HEK293 (cell line): ENCODE measurements at regions of chr11 and their contacts with region 1.

Region 1: DNA sequence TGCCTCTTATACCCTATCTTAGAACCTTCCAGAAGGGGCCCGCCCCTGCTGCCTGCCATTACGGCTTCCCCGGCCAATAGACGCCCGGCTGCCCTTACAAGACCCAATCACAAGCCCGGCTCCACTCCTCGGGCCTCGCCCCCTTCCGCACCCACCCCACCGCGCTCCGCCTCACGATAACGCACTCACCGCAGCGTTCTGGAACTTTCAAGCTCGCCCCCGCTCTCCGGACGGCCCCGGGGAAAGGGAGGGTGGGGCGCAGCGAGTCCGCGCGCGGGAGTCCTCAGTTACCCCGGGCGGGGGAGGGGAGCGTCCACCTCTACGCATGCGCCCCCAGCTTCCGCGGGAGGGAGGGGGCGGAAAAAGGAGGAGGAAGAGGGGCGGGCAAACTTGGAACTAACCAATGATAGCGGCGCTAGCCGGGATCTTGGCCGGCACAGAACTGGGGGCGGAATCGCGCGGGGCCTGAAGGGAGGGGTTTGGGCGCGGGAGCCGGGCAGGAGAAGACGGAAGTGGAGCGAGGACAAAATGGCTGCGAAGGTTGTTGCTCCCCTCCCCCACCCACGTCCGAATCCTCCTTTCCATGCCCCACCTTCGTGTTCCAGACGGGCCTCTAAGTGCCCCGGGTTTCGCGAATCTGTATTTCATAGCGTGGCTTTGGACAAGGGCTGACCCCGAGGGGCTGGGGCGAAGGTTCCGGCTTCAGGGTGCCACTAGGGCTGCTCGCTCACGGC is 389 bp upstream of the HSPA8 start:
- H3K4me3 ChIP-seq: peak overlapping the region; percentile 88
- H3K27ac ChIP-seq: peak overlapping the region; percentile 92
- H3K4me1 ChIP-seq: no peaks in the 10 kb centered on the region
- CTCF ChIP-seq: 0 out of 2 replicates have a peak, but pooled peaks have one; percentile 35

Region 2: DNA sequence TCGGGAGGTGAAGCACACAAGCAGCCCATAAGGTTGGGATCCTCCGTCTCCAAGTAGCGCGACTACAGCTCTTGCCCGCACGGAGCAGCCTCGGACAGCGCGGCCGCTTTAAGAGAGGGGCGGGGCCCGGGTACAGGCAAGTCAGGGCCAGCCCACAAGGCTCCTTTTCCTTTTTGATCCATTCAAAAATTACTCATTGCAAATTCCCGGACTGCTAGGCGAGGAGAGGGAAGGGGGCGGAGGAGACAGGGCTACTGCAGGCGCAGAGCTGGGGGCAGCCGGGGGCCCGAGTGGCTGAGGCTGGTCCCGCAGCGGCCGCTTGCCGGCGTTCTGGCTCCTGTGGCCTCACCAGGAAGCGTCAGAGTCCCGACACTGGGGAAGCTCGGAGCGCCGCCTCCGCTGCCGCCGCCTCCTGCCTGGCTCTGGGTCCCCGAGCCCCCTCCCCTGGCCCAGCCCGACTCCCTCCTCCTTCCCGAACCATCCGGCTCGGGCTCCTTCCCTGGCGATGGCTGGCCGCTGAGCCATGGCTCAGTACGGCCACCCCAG is 406.7 kb before region 1 on chr11 and contains the start of gene UBASH3B:
- CTCF ChIA-PET with region 1: no interaction called
- POLR2A ChIA-PET with region 1: interaction called, 16 read pairs
- H3K4me3 ChIP-seq: peak within 1 kb of the TSS; percentile 78
- H3K27ac ChIP-seq: peak within 1 kb of the TSS; percentile 81; the same call in 1 of the 2 replicates
- H3K4me1 ChIP-seq: peaks cover 5% of the 10 kb centered on the region; the same call in 1 of the 2 replicates
- CTCF ChIP-seq: peak; percentile 41; the same call in 1 of the 2 replicates

Region 3: DNA sequence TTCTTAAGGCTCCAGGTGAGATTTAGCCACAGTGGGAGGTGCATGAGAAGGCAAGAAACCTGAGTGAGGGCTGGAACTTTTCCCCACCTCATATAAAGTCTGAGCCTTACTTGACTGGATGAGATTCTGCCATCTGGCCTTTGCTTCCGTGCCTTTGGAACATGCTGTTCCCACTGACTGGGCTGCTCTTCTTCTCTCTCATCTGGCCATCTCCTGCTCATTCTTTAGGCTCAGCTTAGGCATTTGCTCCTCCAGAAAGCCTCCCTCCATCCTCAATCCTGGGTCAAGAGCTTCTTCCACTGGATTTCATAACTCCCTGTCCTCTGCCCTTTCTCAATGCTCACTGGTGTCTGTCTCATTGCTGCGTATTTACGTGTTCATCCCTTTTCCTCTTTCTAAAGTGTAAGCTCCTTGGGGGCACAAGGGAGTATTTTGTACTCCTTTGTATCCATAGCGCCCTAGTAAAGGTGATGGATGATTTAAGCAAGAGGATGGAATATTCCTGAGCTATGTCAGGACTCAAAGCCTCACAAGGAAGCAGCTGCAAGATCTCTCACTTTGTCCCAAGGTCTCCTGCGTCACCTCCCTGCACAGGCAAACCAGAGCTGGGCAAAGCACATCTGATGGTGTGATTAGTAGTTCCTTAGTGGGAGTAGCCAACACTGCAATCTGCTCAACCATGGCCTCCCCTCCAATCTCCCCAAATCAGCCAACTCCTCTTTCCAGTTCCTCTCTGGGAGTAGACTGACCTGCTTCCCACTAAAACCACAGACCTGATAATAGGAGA is 15.7 kb before region 1 on chr11:
- CTCF ChIA-PET with region 1: interaction called, 3 read pairs
- POLR2A ChIA-PET with region 1: interaction called, 10 read pairs
- H3K4me3 ChIP-seq: no peak overlapping the region
- H3K27ac ChIP-seq: no peak overlapping the region
- H3K4me1 ChIP-seq: no peaks in the 10 kb centered on the region
- CTCF ChIP-seq: no peak

Region 4: DNA sequence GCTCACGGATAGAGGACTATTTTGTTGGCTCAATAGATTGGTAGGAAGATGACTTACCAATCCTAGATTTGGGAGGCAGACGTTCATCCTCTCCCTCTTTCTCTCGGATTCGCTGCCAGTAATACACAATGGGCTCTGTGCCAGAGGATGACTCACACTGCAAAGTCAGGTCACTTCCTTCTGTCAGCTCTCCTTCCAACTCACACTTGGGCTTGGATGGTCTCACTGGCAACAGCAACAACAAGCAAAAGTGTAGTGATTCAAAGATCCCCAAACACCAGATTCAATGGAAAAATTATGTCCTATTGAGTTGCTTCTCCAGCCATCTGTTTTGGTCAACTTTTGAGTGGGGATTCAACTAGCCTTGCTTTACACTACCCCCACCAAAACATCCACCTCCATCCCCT is 21.3 kb after region 1 on chr11:
- CTCF ChIA-PET with region 1: interaction called, 3 read pairs
- POLR2A ChIA-PET with region 1: interaction called, 25 read pairs
- H3K4me3 ChIP-seq: no peak overlapping the region
- H3K27ac ChIP-seq: no peak overlapping the region
- H3K4me1 ChIP-seq: no peaks in the 10 kb centered on the region
- CTCF ChIP-seq: no peak

Region 5: DNA sequence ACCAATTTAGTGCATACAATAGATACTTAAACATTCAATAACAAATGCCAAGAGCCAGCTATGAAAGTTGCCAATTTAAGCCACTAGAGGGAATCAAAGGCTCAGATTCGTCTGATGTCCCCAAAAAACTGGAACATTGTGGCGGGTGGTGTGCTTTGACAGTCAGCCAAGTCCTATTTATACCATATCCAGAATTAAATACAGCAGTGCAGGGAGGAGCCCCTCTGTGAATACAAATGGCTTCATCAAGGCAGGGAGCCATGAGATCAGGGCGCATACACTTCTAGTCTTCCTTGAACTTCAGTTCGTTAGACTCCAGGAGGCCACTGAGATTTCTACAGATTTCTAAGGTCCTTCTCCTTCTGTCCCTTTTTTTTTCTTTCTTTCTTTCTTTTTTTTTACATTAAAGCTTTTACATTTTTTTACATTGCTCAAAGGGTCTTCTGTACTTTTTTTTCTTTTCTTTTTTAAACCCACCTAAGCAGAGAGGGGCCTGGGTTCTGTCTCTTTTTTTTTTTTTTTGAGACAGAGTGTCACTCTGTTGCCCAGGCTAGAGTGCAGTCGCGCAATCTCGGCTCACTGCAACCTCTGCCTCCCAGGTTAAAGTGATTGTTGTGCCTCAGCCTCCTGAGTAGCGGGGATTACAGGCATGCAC is 41.1 kb after region 1 on chr11:
- CTCF ChIA-PET with region 1: interaction called, 7 read pairs
- POLR2A ChIA-PET with region 1: interaction called, 11 read pairs
- H3K4me3 ChIP-seq: no peak overlapping the region
- H3K27ac ChIP-seq: no peak overlapping the region
- H3K4me1 ChIP-seq: 0 out of 2 replicates have a peak, but pooled peaks cover 3% of the 10 kb centered on the region
- CTCF ChIP-seq: no peak; the same call in 1 of the 2 replicates

Region 6: GRCh38 chr11:123170929-123171328 is 108.6 kb after region 1 on chr11:
- CTCF ChIA-PET with region 1: no interaction called
- POLR2A ChIA-PET with region 1: no interaction called
- H3K4me3 ChIP-seq: no peak overlapping the region
- H3K27ac ChIP-seq: no peak overlapping the region
- H3K4me1 ChIP-seq: no peaks in the 10 kb centered on the region
- CTCF ChIP-seq: no peak

Region 7: DNA sequence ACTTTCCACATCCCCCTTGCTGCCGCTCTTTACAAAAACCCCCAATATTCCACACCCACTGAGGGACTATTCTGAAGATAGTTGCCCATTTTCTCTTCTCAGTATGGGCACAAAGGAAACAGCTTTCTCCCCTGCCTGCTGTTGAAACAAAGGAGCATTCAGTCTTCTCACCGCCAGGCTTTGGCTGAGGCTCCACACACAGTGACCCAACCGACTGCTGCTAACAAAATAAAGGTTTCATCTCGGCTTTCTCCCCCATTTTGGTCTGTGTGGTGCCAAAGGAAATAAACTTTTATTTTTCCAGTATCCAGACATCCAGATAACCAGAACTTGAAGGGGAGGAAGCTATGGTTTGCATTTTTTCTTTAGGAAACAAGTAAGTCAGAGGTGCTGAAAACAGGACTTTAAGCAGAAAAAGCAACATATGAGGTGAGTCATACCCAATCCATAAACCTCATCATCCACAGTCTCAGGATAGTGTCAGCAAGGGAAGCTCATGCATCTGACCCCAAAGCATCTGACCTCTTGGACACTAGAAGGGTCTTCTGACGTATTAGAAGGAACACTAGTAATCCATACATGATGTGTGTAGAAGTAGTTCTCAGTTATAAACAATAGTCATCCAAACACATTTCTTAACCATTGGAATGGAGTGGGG is 126.3 kb after region 1 on chr11:
- CTCF ChIA-PET with region 1: no interaction called
- POLR2A ChIA-PET with region 1: no interaction called
- H3K4me3 ChIP-seq: no peak overlapping the region
- H3K27ac ChIP-seq: no peak overlapping the region
- H3K4me1 ChIP-seq: no peaks in the 10 kb centered on the region; the same call in 1 of the 2 replicates
- CTCF ChIP-seq: no peak

Region 8: GRCh38 chr11:123268118-123268517 is 205.8 kb after region 1 on chr11:
- CTCF ChIA-PET with region 1: no interaction called
- POLR2A ChIA-PET with region 1: no interaction called
- H3K4me3 ChIP-seq: no peak overlapping the region
- H3K27ac ChIP-seq: no peak overlapping the region
- H3K4me1 ChIP-seq: peaks cover 6% of the 10 kb centered on the region
- CTCF ChIP-seq: no peak

Region 9: GRCh38 chr11:123519055-123519796 is 456.9 kb after region 1 on chr11:
- CTCF ChIA-PET with region 1: no interaction called
- POLR2A ChIA-PET with region 1: no interaction called
- H3K4me3 ChIP-seq: no peak overlapping the region
- H3K27ac ChIP-seq: no peak overlapping the region
- H3K4me1 ChIP-seq: no peaks in the 10 kb centered on the region
- CTCF ChIP-seq: no peak